Astrocyte of the spinal cord (primary cell): ENCODE measurements at regions of chr2 and their contacts with region 1.

Region 1: DNA sequence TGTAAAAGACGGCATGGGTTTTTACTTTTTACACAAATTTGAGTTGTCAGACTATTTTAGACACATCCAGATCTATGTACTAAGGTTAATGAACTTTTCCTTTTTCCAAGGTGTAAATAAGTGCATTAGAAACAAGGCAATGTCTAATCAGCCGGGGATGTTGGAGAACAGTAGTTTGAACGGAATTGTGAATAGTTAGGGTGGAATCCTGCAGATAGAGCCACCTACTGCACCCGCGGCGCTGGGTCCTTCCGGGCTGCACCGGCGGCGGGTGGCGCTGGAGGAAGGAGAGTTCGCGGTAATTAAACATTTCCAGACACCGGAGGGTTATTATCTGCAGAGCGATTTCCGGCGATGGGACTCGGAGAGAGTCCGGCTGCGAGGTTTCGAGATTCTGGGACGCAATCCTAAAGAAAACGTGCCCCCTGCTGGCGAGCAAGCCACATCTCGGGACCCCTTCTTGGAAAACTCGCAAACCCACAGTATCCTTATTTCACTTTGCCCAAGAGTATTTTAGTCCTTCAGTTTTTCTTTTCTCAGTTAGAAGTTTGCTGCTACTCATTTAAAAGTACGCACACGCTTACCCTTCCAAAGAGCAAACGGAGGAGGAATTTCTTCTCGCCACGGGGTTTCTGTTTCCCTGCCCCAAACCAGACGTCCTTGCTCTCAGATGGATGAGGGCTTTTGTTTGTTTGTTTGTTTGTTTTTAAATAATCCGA is 4.5 kb upstream of the OSR1 start:
- DNase-seq: peak; percentile 87
- H3K4me3 ChIP-seq: peak overlapping the region; percentile 64
- CTCF ChIP-seq: peak; percentile 74

Region 2: GRCh38 chr2:18520451-18521425 is 842.2 kb before region 1 on chr2:
- in situ Hi-C with region 1: loop called (anchors 25 kb)
- DNase-seq: peak; percentile 85
- H3K4me3 ChIP-seq: no peak overlapping the region
- CTCF ChIP-seq: peak; percentile 89